GM12878 (cell line): ENCODE measurements at regions of chr5 and their contacts with region 1.

Region 1: DNA sequence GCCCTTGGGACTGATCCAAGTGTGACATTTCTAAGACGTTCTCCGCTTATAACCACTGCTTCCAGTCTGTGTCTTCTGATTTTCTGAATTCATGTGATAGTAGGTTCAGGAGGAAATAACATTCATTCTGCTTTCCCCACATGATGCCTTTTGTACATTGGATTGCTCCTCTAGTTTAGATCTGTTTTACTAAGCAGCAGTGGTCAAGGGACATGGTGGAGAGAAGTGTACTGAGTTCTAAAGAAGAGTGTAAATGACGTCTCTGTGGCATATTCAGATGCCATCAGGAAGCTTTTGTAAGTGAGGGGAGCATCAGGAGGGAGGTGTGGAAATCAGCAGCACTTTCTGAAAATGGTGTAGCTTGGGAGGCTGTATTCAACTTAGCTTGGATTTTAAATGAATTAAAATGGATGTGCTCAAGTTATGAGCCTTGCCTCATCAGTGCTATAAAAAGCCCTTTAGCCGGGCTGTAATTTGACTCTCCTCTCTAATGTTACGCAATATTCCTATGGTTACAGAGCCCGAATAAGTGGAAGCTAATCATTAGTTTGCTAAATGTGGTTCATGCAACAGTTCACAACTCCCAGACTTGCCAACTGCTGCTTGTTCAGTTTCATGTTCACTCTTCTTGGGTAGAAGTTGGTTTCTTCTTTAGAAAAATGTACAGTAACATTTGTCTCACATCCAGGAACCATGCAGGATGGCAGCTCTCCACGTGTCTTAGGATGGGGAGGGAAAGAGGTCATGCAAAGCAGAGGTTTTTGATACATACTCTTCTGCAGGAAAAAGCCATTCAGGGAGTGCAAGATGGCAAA is 281.3 kb downstream of the ARHGAP26 start:
- DNase-seq: no peak
- ATAC-seq: peak; percentile 10
- H3K4me3 ChIP-seq: no peak overlapping the region
- H3K27ac ChIP-seq: no peak overlapping the region; the same call in 1 of the 2 replicates
- H3K4me1 ChIP-seq: peaks cover 38% of the 10 kb centered on the region
- H3K27me3 ChIP-seq: no peaks in the 10 kb centered on the region
- CTCF ChIP-seq: no peak
- EP300 ChIP-seq: no peak
- POLR2A ChIP-seq: no peak
- RAD21 ChIP-seq: no peak

Region 2: GRCh38 chr5:142386137-142387032 is 665.1 kb before region 1 on chr5:
- CTCF ChIA-PET with region 1: no interaction called
- POLR2A ChIA-PET with region 1: no interaction called
- RAD21 ChIA-PET with region 1: no interaction called
- SMC1A ChIA-PET with region 1: no interaction called
- in situ Hi-C with region 1: no loop called
- intact Hi-C with region 1: no loop called
- DNase-seq: no peak
- ATAC-seq: peak; percentile 56
- H3K4me3 ChIP-seq: no peak overlapping the region
- H3K27ac ChIP-seq: no peak overlapping the region
- H3K4me1 ChIP-seq: no peaks in the 10 kb centered on the region
- H3K27me3 ChIP-seq: no peaks in the 10 kb centered on the region; a peak in 1 of 4 replicates
- CTCF ChIP-seq: no peak
- EP300 ChIP-seq: no peak
- POLR2A ChIP-seq: no peak
- RAD21 ChIP-seq: no peak

Region 3: GRCh38 chr5:142900927-142901326 is 150.5 kb before region 1 on chr5:
- CTCF ChIA-PET with region 1: no interaction called
- POLR2A ChIA-PET with region 1: no interaction called
- RAD21 ChIA-PET with region 1: no interaction called
- SMC1A ChIA-PET with region 1: no interaction called
- in situ Hi-C with region 1: no loop called
- intact Hi-C with region 1: no loop called
- DNase-seq: no peak
- ATAC-seq: no peak
- H3K4me3 ChIP-seq: no peak overlapping the region
- H3K27ac ChIP-seq: no peak overlapping the region
- H3K4me1 ChIP-seq: no peaks in the 10 kb centered on the region
- H3K27me3 ChIP-seq: no peaks in the 10 kb centered on the region
- CTCF ChIP-seq: no peak
- EP300 ChIP-seq: no peak
- POLR2A ChIP-seq: no peak
- RAD21 ChIP-seq: no peak

Region 4: DNA sequence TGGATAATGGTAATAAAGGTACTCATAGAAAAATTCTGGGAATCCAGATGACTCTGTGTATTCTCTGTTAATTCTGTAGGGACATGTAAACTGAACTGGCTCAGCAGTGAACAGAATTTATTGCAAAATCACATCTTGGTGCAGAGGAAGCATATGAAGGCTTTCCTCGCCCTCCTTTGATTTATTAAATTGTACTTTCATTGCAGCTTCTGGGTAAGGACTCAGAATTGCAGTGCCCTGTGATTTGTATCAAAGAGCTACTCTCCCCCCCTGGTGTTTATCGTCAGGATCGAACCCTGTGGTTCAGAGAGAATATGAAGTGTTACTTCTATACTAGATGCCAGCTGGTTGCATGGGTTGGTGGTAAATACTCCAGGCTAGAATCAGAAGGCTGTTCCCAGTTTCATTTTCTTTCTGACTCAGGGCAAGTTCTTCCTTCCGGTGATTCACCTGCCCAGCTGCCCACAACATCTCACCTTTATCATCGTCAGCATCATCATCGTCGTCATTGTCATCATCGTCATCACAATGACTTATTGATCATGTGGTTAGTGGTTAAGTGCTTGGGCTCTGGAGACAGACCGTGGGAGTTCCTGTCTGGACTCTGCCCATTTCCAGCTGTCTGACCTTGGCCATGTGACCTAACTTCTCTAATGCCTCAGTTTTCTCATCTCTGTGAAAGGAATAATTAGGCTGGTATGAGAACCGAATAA is 42.5 kb before region 1 on chr5:
- CTCF ChIA-PET with region 1: interaction called, 3 read pairs
- POLR2A ChIA-PET with region 1: no interaction called
- RAD21 ChIA-PET with region 1: interaction called, 6 read pairs
- SMC1A ChIA-PET with region 1: interaction called, 19 read pairs
- in situ Hi-C with region 1: no loop called
- intact Hi-C with region 1: loop called (anchors 10 kb)
- DNase-seq: peak; percentile 98
- ATAC-seq: peak; percentile 90
- H3K4me3 ChIP-seq: no peak overlapping the region
- H3K27ac ChIP-seq: peak overlapping the region; percentile 47; the same call in 1 of the 2 replicates
- H3K4me1 ChIP-seq: peaks cover 27% of the 10 kb centered on the region
- H3K27me3 ChIP-seq: no peaks in the 10 kb centered on the region
- CTCF ChIP-seq: peak; percentile 13 to 25 (median 25); a peak in 2 of 6 replicates
- EP300 ChIP-seq: peak; percentile 100
- POLR2A ChIP-seq: no peak
- RAD21 ChIP-seq: 0 out of 2 replicates have a peak, but pooled peaks have one; percentile 30

Region 5: DNA sequence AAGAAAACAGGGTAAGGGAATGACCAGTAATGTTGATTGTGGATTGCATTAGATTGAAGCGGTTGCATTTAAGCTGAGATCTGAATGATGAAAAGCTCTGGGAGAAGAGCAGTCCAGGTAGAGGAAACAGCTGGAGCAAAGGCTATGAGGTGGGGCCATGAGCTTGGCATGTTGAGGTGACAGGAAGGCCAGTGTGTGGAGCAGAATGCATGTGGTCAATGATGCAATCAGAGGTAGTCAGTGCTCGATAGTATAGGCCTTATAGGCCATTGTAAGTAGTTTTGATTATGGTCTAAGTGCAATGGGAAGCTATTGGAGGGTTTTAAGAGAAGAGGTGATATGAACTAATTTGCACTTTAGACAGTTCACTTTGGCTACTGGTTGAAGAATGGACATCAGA is 10.8 kb before region 1 on chr5:
- CTCF ChIA-PET with region 1: interaction called, 14 read pairs
- POLR2A ChIA-PET with region 1: interaction called, 62 read pairs
- RAD21 ChIA-PET with region 1: interaction called, 20 read pairs
- SMC1A ChIA-PET with region 1: interaction called, 441 read pairs
- in situ Hi-C with region 1: no loop called
- intact Hi-C with region 1: no loop called
- DNase-seq: no peak
- ATAC-seq: peak; percentile 18; the same call in 2 of the 3 replicates
- H3K4me3 ChIP-seq: no peak overlapping the region
- H3K27ac ChIP-seq: no peak overlapping the region
- H3K4me1 ChIP-seq: peaks cover 31% of the 10 kb centered on the region
- H3K27me3 ChIP-seq: no peaks in the 10 kb centered on the region
- CTCF ChIP-seq: no peak
- EP300 ChIP-seq: no peak
- POLR2A ChIP-seq: no peak
- RAD21 ChIP-seq: no peak

Region 6: DNA sequence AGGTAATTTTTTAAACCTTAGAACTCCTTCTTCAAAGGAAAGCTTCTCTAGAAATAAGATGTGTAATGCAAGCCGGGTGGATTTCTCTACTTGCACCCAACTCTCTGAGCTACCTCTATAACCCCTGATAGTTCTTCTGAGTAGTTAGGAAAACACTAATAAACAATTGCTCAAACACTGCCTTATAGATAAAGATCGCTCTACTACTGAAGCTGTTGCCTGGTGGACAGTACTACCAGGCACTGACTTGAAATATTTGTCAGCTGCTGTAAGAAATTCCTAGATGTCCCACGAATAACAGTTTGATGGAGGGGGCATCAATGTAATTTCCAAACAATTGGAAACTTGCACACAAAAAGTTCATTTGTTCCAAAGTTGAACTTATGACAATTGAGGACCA is 310.0 kb after region 1 on chr5:
- CTCF ChIA-PET with region 1: no interaction called
- POLR2A ChIA-PET with region 1: no interaction called
- RAD21 ChIA-PET with region 1: no interaction called
- SMC1A ChIA-PET with region 1: no interaction called
- in situ Hi-C with region 1: no loop called
- intact Hi-C with region 1: no loop called
- DNase-seq: no peak
- ATAC-seq: peak; percentile 33; the same call in 2 of the 3 replicates
- H3K4me3 ChIP-seq: no peak overlapping the region
- H3K27ac ChIP-seq: no peak overlapping the region
- H3K4me1 ChIP-seq: peaks cover 19% of the 10 kb centered on the region
- H3K27me3 ChIP-seq: no peaks in the 10 kb centered on the region
- CTCF ChIP-seq: no peak
- EP300 ChIP-seq: no peak
- POLR2A ChIP-seq: no peak
- RAD21 ChIP-seq: no peak